HEK293T (cell line): ENCODE measurements at regions of chr2 and their contacts with region 1.

Region 1: DNA sequence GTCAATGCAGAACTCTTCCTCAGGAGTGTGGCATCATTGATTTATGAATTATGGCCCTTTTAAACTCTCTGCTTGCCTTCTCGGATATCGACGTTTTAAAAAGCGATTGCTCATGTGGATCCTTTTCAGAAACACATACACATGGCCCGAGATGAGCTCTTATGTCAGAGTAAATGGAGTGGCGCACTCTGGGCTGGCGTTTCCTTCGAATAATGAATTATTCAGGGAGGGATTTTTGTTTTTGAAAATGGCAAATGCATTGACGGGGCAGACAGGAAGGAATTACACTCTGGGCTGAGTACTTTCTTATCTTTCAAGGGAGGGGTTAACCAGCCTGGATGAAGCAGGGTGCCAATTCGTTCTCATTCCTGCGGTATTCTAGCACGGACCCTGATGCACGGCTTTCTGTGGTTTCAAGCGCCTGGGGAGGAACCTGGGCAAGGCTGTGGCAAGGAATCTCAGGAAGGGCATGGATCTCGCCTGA is 142.7 kb downstream of the PRKCE start:
- DNase-seq: no peak

Region 2: GRCh38 chr2:45778720-45779171 is 15.4 kb before region 1 on chr2:
- CTCF ChIA-PET with region 1: interaction called, 10 read pairs
- POLR2A ChIA-PET with region 1: no interaction called
- DNase-seq: peak; percentile 73

Region 3: GRCh38 chr2:45813003-45813941 is 19.1 kb after region 1 on chr2:
- CTCF ChIA-PET with region 1: no interaction called
- POLR2A ChIA-PET with region 1: no interaction called
- DNase-seq: peak; percentile 26